HepG2 (cell line): ENCODE measurements at regions of chr3 and their contacts with region 1.

Region 1: DNA sequence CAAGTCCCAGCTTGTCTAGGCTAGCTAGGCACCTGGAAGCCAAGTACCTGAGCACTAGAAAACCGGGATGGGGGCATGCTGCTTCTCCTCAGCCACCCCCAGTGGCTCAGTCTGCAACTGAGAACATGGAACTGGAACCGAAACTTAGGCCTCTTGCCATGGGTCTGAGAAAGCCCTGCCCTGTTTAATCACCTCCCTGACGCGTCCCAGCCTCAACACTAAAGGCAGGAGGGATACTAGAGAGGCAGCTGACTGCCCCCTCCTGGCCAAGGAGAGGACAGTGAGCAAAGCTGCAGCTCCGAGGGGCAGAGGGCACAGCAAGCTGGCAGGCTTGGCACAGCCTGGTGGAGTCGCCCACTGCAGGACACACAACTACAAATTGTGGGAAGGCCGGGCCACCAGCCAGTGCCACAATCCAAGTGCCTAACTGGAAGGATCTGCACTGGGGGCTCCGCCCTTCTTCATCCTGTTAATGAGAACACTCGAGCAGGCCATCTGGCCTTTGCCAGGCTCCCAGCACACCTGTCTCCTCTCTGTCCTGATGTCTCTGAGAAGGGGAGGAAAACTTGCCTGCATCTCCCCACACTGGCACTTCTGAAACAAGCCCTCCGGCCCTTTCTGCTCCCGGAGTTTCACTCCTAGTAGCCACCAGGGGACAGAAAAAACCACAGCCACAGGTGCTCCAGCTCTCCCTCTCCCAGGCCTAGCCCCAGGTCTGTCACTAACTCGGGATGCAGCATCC is 53.7 kb downstream of the BDH1 start:
- DNase-seq: peak; percentile 78
- ATAC-seq: peak; percentile 74
- H3K4me3 ChIP-seq: peak overlapping the region; percentile 50 to 71 (median 53)
- H3K27ac ChIP-seq: peak overlapping the region; percentile 28
- H3K4me1 ChIP-seq: peaks cover 52% of the 10 kb centered on the region
- H3K27me3 ChIP-seq: no peaks in the 10 kb centered on the region
- CTCF ChIP-seq: peak; percentile 95
- EP300 ChIP-seq: no peak
- POLR2A ChIP-seq: no peak
- RAD21 ChIP-seq: peak; percentile 91

Region 2: DNA sequence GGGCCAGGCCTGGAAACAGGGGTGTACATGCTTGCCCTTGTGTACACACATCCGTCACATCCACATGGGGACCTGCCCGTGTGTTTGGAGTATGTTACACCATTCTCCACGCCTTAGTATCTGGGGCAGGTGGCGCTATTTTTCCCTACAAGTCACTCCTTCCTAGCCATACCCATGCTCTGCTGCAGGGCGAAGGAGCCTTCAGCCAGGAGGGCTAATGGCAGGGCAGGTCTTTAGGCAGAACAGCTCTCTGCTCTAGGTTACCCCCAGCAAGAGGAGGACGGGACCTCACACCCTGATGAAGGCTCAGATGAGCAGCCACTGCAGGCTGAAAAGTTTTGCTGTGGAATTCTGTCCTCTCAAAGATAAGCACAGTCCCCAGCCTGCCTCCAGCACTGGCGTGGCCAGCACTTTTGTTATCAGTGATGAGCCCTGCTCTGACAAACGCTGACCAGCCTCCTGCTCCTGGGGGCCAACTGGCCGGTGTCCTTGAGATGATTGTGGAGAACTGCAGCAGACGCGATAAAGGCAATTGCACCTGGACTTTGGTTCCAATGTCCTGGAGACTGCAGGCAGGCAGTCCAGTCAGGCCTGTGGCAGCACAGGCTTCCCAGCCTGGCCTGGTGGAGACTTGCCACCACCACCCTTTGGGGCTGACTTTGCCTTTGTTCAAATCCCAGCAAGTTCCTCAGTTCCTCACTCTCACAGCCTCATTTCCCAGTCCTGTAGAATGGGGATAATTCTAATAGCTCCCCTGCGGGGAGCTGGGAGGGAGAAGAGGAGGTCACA is 513.6 kb before region 1 on chr3:
- CTCF ChIA-PET with region 1: no interaction called
- POLR2A ChIA-PET with region 1: no interaction called
- in situ Hi-C with region 1: loop called (anchors 25 kb)
- intact Hi-C with region 1: no loop called
- DNase-seq: peak; percentile 74
- ATAC-seq: peak; percentile 77
- H3K4me3 ChIP-seq: peak overlapping the region; percentile 31 to 57 (median 31); a peak in 5 of 6 replicates
- H3K27ac ChIP-seq: peak overlapping the region; percentile 77
- H3K4me1 ChIP-seq: peaks cover 73% of the 10 kb centered on the region
- H3K27me3 ChIP-seq: no peaks in the 10 kb centered on the region
- CTCF ChIP-seq: peak; percentile 68
- EP300 ChIP-seq: peak in 1 of 2 experiments; percentile 45; a peak in 1 of 4 replicates
- POLR2A ChIP-seq: no peak; a peak in 1 of 4 replicates
- RAD21 ChIP-seq: no peak

Region 3: GRCh38 chr3:197256836-197257444 is 245.1 kb before region 1 on chr3:
- CTCF ChIA-PET with region 1: interaction called, 9 read pairs
- POLR2A ChIA-PET with region 1: interaction called, 3 read pairs
- in situ Hi-C with region 1: no loop called
- intact Hi-C with region 1: loop called (anchors 2 kb)
- DNase-seq: peak; percentile 41
- ATAC-seq: no peak
- H3K4me3 ChIP-seq: no peak overlapping the region
- H3K27ac ChIP-seq: no peak overlapping the region
- H3K4me1 ChIP-seq: peaks cover 35% of the 10 kb centered on the region
- H3K27me3 ChIP-seq: no peaks in the 10 kb centered on the region
- CTCF ChIP-seq: peak; percentile 46
- EP300 ChIP-seq: no peak
- POLR2A ChIP-seq: no peak
- RAD21 ChIP-seq: 0 out of 2 replicates have a peak, but pooled peaks have one; percentile 25

Region 4: DNA sequence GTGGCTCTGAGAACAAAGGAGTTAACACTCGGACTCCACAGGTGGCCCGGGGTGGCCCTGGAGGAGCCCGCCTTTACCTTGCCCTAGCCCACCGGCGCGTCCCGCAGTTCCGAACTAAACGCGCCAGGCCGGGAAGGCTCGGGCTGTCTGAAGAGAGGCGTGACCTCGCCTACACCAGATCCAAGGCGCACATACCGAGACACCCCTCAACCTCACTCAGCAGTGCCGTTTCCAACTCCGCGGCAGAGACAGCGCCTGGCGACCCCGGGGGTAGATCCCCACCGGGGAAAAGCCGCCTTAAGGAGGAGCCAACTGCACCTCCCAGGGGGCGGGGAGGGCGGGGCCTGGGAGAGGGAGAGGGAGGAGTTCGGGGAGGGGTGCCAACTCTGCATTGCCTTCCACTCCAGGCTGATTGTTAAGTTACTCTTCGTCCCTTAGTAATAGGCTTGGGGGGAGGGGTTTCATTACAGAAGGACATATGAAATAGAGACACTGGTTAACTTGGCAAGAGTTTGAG is 203.7 kb before region 1 on chr3 and contains the start of gene DLG1:
- CTCF ChIA-PET with region 1: no interaction called
- POLR2A ChIA-PET with region 1: interaction called, 11 read pairs
- in situ Hi-C with region 1: loop called (anchors 10 kb)
- intact Hi-C with region 1: loop called (anchors 5 kb)
- DNase-seq: peak; percentile 88
- ATAC-seq: peak; percentile 78
- H3K4me3 ChIP-seq: peak within 1 kb of the TSS; percentile 91 to 95 (median 94)
- H3K27ac ChIP-seq: peak within 1 kb of the TSS; percentile 98
- H3K4me1 ChIP-seq: peaks cover 54% of the 10 kb centered on the region
- H3K27me3 ChIP-seq: no peaks in the 10 kb centered on the region; a peak in 1 of 5 replicates
- CTCF ChIP-seq: no peak
- EP300 ChIP-seq: no peak
- POLR2A ChIP-seq: peak; percentile 87 to 88
- RAD21 ChIP-seq: peak; percentile 49; the same call in 1 of the 2 replicates
- total RNA-seq, gene DLG1: 104 and 105 TPM in 2 replicates

Region 5: DNA sequence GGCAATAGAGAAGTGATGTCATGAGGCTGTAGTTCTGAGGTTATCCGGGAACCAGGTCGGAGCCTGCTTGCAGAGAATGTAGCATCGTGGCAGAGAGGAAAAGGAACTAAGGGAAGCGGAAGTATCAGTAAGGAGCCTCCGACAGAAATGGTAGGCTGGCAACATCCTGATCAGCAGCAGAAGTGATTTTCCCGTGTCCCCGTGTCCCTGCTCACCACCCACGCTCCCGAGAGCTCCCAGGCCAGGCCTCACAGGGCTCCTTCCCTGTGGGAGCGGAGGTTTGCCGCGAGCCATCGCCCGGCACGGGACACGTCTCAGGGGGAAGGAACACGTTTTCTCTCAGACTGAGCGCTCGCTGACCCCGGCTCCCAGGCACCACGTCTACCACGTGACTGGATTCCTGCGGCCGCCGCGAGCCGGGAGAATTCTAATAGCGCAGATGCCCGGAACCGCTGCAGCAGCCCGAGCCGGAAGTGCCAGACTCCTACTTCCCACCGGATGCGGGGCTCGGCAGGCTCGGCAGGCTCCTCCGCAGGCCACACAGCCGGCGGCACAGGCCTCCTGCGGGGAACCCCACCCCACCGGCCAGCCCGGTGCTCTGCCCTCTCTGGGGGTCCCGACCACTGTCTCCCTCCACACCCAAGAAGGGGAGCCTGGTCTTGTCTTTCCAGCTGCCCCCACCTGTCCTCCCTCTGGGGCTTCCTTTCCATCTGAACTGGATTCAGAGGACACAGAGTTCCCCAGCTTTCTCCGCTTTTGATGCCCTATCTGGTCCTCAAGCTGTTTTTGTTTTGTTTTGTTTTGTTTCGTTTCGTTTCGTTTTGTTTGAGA is 45.6 kb before region 1 on chr3:
- CTCF ChIA-PET with region 1: interaction called, 3 read pairs
- POLR2A ChIA-PET with region 1: interaction called, 9 read pairs
- in situ Hi-C with region 1: no loop called
- intact Hi-C with region 1: loop called (anchors 2 kb)
- DNase-seq: peak; percentile 69
- ATAC-seq: peak; percentile 72
- H3K4me3 ChIP-seq: peak overlapping the region; percentile 56 to 67 (median 64); a peak in 5 of 6 replicates
- H3K27ac ChIP-seq: peak overlapping the region; percentile 82
- H3K4me1 ChIP-seq: peaks cover 52% of the 10 kb centered on the region
- H3K27me3 ChIP-seq: no peaks in the 10 kb centered on the region
- CTCF ChIP-seq: no peak
- EP300 ChIP-seq: no peak
- POLR2A ChIP-seq: peak; percentile 67 to 75
- RAD21 ChIP-seq: no peak; the same call in 1 of the 2 replicates

Region 6: GRCh38 chr3:197811343-197811742 is 309.3 kb after region 1 on chr3:
- CTCF ChIA-PET with region 1: no interaction called
- POLR2A ChIA-PET with region 1: no interaction called
- in situ Hi-C with region 1: no loop called
- intact Hi-C with region 1: no loop called
- DNase-seq: no peak
- ATAC-seq: no peak
- H3K4me3 ChIP-seq: no peak overlapping the region
- H3K27ac ChIP-seq: no peak overlapping the region
- H3K4me1 ChIP-seq: peaks cover 16% of the 10 kb centered on the region
- H3K27me3 ChIP-seq: no peaks in the 10 kb centered on the region; a peak in 1 of 5 replicates
- CTCF ChIP-seq: no peak
- EP300 ChIP-seq: no peak
- POLR2A ChIP-seq: no peak
- RAD21 ChIP-seq: no peak